ENCODE measurements at regions of chr14 and their contacts with region 1.

Region 1: DNA sequence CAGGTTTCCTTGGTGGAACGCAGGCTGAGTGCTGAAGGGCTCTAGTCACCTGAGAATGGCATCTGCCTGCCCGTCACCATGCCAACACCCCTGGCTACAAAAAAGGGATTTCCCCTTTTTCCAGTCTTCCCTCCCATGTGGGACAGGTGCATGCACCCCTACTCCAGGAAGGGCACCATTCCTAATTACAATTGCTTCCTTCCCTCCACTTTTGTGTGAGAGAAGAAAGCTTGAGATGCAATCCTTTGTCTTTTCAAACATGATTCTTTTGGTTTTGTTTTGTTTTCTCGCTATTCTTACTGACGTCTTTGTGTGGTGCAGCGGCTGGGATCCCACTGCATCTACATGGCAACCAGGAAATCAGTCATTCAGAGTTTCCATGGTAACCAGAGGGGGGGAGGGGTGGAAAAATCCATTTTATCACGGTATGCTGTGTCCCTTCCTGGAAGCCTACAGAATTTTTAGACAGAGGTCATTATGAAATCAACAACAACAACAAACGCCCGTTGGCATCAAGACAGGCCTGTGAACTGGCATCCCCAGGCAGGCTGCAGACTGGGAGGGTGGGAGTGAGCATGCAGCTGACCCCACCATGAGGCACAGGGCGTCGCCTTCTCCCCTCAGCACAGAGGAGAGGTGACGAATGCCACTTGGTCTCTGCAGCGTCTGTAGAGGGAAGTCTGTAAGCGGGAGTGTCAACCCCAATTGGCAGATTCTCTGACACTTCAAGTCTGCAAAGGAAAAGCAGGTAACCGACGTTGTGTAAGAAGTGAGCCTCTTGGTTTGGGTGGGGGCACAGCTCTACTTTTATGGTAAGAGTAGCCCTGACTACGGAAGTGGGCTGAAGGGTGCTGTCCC is 13.6 kb upstream of the GNG2 start:
- DNase-seq: peak; percentile 93
- ATAC-seq: peak; percentile 83
- H3K4me3 ChIP-seq: peak overlapping the region; percentile 67
- H3K27ac ChIP-seq: peak overlapping the region; percentile 97
- H3K4me1 ChIP-seq: peaks cover 54% of the 10 kb centered on the region
- H3K27me3 ChIP-seq: no peaks in the 10 kb centered on the region
- CTCF ChIP-seq: no peak
- EP300 ChIP-seq: peak; percentile 75 to 93
- POLR2A ChIP-seq: peak; percentile 87
- RAD21 ChIP-seq: no peak

Region 2: DNA sequence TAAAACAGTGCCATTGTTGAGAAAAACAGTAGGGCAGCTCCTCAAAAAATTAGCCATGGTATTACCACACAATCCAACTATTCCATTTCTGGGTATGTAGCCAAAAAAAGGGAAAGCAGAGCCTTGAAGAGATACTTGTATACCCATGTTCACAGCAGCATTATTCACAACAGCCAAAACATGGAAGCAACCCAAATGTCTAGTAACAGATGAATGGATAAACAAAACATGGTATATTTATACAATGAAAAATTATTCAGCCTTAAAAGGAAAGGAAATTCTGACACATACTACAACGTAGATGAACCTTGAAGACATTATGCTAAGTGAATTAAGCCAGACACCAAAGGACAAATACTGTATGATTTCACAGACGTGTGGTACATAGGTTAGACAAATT is 54.0 kb before region 1 on chr14:
- CTCF ChIA-PET with region 1: no interaction called
- POLR2A ChIA-PET with region 1: no interaction called
- RAD21 ChIA-PET with region 1: no interaction called
- SMC1A ChIA-PET with region 1: no interaction called
- in situ Hi-C with region 1: no loop called
- intact Hi-C with region 1: no loop called
- DNase-seq: no peak
- ATAC-seq: no peak
- H3K4me3 ChIP-seq: no peak overlapping the region
- H3K27ac ChIP-seq: no peak overlapping the region
- H3K4me1 ChIP-seq: no peaks in the 10 kb centered on the region
- H3K27me3 ChIP-seq: no peaks in the 10 kb centered on the region
- CTCF ChIP-seq: no peak
- EP300 ChIP-seq: no peak
- POLR2A ChIP-seq: no peak
- RAD21 ChIP-seq: no peak

Region 3: DNA sequence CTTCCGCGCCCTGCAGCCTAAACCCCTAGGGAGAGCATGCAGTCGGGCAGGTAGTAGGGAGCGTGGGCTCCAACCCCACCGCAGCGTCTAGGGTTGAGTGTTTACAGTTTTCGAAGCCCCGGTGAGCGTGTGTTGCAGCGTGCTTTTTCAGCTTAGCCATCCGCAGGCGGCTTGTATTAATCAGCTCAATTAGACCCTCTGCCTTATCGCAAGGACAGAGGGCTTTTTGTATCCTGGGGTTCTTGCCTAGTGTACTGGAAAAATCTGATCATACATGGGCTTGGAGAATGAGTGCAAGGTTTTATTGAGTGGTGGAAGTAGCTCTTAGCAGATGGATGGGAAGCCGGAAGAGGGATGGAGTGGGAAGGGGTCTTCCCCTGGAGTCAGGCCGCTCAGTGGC is 30.8 kb before region 1 on chr14:
- CTCF ChIA-PET with region 1: no interaction called
- POLR2A ChIA-PET with region 1: no interaction called
- RAD21 ChIA-PET with region 1: no interaction called
- SMC1A ChIA-PET with region 1: no interaction called
- in situ Hi-C with region 1: no loop called
- intact Hi-C with region 1: no loop called
- DNase-seq: no peak
- ATAC-seq: no peak
- H3K4me3 ChIP-seq: no peak overlapping the region
- H3K27ac ChIP-seq: no peak overlapping the region
- H3K4me1 ChIP-seq: no peaks in the 10 kb centered on the region
- H3K27me3 ChIP-seq: no peaks in the 10 kb centered on the region
- CTCF ChIP-seq: no peak
- EP300 ChIP-seq: no peak
- POLR2A ChIP-seq: no peak
- RAD21 ChIP-seq: no peak

Region 4: DNA sequence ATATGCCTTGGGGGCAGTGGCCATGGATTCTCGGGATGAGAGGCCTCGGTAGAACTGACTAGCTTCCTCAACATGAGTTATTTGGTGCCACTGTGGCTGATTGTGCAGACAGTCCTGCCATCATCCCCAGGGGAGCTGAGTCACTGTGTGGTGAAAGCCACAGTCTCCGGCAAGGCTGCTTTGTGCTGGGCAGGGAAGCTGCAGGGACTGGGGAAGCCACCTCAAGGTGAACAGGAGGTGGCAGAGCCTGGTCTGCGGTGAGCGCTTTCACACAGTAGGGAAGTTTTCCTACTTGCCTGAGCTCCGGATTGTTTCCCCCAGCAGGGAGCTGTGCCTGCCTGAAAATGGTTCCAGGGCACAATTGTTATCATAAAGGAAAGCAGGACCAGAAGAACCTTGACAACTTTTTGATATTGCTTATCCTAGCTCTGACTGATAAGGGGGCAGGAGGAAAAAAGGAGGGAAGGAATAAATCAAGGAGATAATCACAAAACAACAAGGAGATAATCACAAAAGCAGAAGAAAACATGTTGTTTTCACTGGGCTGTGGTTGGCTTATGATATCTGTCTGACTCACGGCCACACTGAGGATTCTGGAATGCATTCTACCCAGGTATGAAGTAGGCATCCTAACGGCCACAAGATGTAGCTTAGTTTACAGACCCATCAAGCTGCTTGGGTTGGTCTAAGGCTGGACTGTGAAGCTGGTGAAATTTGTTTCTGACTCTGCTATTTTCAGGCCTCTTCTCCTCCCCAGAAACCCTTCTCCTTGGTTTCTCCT is 18.7 kb before region 1 on chr14:
- CTCF ChIA-PET with region 1: interaction called, 11 read pairs
- POLR2A ChIA-PET with region 1: interaction called, 15 read pairs
- RAD21 ChIA-PET with region 1: interaction called, 15 read pairs
- SMC1A ChIA-PET with region 1: interaction called, 12 read pairs
- in situ Hi-C with region 1: no loop called
- intact Hi-C with region 1: no loop called
- DNase-seq: peak; percentile 74
- ATAC-seq: peak; percentile 99
- H3K4me3 ChIP-seq: no peak overlapping the region
- H3K27ac ChIP-seq: no peak overlapping the region
- H3K4me1 ChIP-seq: no peaks in the 10 kb centered on the region
- H3K27me3 ChIP-seq: no peaks in the 10 kb centered on the region
- CTCF ChIP-seq: peak in 1 of 3 experiments; percentile 26; a peak in 2 of 6 replicates
- EP300 ChIP-seq: peak in 1 of 2 experiments; percentile 17; a peak in 1 of 4 replicates
- POLR2A ChIP-seq: no peak
- RAD21 ChIP-seq: 0 out of 2 replicates have a peak, but pooled peaks have one; percentile 3

Region 5: GRCh38 chr14:51865953-51866747 is 19.3 kb after region 1 on chr14:
- CTCF ChIA-PET with region 1: interaction called, 23 read pairs
- POLR2A ChIA-PET with region 1: interaction called, 41 read pairs
- RAD21 ChIA-PET with region 1: interaction called, 59 read pairs
- SMC1A ChIA-PET with region 1: interaction called, 194 read pairs
- in situ Hi-C with region 1: no loop called
- intact Hi-C with region 1: no loop called
- DNase-seq: no peak
- ATAC-seq: peak; percentile 62
- H3K4me3 ChIP-seq: peak overlapping the region; percentile 34
- H3K27ac ChIP-seq: peak overlapping the region; percentile 88
- H3K4me1 ChIP-seq: peaks cover 44% of the 10 kb centered on the region
- H3K27me3 ChIP-seq: no peaks in the 10 kb centered on the region
- CTCF ChIP-seq: no peak
- EP300 ChIP-seq: 0 out of 4 replicates have a peak, but pooled peaks of 1 of the 2 experiments have one; percentile 20
- POLR2A ChIP-seq: no peak
- RAD21 ChIP-seq: no peak

Region 6: GRCh38 chr14:51922624-51923023 is 75.8 kb after region 1 on chr14:
- CTCF ChIA-PET with region 1: no interaction called
- POLR2A ChIA-PET with region 1: no interaction called
- RAD21 ChIA-PET with region 1: no interaction called
- SMC1A ChIA-PET with region 1: no interaction called
- in situ Hi-C with region 1: no loop called
- intact Hi-C with region 1: no loop called
- DNase-seq: no peak
- ATAC-seq: no peak
- H3K4me3 ChIP-seq: no peak overlapping the region
- H3K27ac ChIP-seq: no peak overlapping the region
- H3K4me1 ChIP-seq: no peaks in the 10 kb centered on the region
- H3K27me3 ChIP-seq: no peaks in the 10 kb centered on the region
- CTCF ChIP-seq: no peak
- EP300 ChIP-seq: no peak
- POLR2A ChIP-seq: no peak
- RAD21 ChIP-seq: no peak

Measured in GM12878 (cell line).